HEK293 (cell line): ENCODE measurements at regions of chr12 and their contacts with region 1.

Region 1: DNA sequence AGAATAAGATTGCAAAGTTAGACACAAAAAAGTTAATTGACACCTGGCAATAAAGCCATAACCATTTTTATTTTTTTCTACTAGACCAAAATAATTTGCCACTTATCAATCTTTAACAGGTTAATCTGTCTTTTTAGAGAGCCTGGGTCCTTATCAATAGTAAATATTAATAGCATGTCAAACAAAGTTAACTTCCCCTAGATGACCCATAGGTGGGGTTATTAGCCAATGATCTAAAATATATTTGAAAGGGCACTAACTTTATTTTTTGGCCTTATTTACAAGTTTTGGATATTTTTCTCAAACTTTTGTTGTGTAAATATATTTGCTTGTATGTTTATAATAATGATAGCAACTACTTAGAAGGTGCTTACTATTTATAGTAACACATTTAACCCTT is 3.9 kb downstream of the ANKRD33 start:
- H3K4me3 ChIP-seq: no peak overlapping the region
- H3K27ac ChIP-seq: no peak overlapping the region
- H3K4me1 ChIP-seq: no peaks in the 10 kb centered on the region
- CTCF ChIP-seq: no peak

Region 2: GRCh38 chr12:51905471-51906429 is 13.9 kb after region 1 on chr12:
- CTCF ChIA-PET with region 1: interaction called, 10 read pairs
- POLR2A ChIA-PET with region 1: no interaction called
- H3K4me3 ChIP-seq: no peak overlapping the region
- H3K27ac ChIP-seq: no peak overlapping the region
- H3K4me1 ChIP-seq: no peaks in the 10 kb centered on the region
- CTCF ChIP-seq: no peak

Region 3: DNA sequence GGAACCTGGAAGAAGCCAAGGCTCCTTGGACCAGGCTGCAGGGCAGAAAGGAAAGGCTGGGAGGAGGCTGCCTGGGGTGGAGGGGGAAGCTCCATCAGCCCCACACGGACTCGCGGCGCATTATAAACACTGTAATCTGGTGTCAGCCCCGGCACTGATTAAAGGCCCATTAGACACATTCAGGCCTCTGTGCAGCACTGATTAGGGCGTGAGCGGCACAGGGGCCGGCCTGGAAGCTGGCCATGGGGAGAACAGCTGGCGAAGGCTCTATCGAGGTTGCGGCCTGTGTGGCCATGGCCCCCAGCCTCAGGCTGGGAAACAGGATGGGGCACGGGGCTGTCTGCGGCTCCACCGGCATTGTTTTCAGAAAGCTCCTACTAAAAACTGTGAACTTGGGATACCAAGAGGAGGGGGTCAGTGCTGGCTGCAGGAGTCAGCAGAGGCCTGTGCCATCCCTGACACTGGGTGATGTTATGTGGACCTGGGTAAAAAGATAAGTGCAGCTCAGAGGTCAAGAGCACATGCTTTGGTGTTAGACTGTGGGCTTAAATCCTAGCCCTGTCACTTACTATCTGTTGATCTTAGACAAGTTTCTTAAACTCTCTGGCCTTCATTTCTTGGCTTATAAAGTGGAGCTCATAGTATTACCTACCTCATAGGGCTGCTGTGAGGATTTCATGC is 26.1 kb after region 1 on chr12:
- CTCF ChIA-PET with region 1: interaction called, 19 read pairs
- POLR2A ChIA-PET with region 1: no interaction called
- H3K4me3 ChIP-seq: no peak overlapping the region
- H3K27ac ChIP-seq: no peak overlapping the region
- H3K4me1 ChIP-seq: no peaks in the 10 kb centered on the region
- CTCF ChIP-seq: no peak

Region 4: GRCh38 chr12:51980051-51980808 is 88.4 kb after region 1 on chr12:
- CTCF ChIA-PET with region 1: interaction called, 40 read pairs
- POLR2A ChIA-PET with region 1: no interaction called
- H3K4me3 ChIP-seq: no peak overlapping the region
- H3K27ac ChIP-seq: no peak overlapping the region
- H3K4me1 ChIP-seq: no peaks in the 10 kb centered on the region
- CTCF ChIP-seq: peak; percentile 75

Region 5: DNA sequence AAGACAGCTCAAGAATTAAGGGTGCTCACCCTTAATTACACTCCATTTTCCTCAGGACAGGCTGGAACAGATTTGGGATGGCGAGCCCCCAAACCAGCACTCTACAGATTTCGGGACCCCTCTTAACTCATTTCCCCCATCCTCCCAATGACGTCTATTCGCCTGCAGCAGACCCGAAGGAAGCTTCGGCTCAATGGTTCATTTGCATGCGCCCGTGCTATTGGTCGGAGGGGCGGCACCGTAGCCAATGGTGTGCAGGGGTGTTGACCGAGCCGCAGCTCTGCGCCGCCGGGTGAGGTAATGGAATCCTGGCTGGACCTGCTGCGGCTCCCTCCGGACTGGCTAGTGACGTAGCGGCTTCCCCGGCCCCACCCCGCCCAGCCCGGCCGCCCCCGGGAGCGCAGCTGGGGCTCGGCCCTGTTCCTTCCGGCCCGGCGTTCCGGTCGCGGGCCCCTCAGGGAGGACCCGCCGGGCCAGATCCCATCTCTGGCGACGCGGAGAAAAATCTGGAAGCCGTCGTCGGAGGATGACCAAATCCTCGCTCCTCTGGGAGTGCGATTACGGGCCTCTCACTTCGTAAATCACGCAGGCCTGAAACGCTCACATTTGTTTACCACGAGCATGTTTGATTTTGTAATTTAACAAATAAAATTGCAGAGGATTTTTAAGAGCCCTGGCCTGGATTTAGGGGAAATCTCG is 141.1 kb after region 1 on chr12:
- CTCF ChIA-PET with region 1: no interaction called
- POLR2A ChIA-PET with region 1: no interaction called
- H3K4me3 ChIP-seq: 0 out of 2 replicates have a peak overlapping the region, but pooled peaks have one; percentile 9
- H3K27ac ChIP-seq: no peak overlapping the region; the same call in 1 of the 2 replicates
- H3K4me1 ChIP-seq: peaks cover 13% of the 10 kb centered on the region
- CTCF ChIP-seq: no peak